Right cardiac atrium (tissue), 5 donors: ENCODE measurements at regions of chr4 and their contacts with region 1.

Region 1: DNA sequence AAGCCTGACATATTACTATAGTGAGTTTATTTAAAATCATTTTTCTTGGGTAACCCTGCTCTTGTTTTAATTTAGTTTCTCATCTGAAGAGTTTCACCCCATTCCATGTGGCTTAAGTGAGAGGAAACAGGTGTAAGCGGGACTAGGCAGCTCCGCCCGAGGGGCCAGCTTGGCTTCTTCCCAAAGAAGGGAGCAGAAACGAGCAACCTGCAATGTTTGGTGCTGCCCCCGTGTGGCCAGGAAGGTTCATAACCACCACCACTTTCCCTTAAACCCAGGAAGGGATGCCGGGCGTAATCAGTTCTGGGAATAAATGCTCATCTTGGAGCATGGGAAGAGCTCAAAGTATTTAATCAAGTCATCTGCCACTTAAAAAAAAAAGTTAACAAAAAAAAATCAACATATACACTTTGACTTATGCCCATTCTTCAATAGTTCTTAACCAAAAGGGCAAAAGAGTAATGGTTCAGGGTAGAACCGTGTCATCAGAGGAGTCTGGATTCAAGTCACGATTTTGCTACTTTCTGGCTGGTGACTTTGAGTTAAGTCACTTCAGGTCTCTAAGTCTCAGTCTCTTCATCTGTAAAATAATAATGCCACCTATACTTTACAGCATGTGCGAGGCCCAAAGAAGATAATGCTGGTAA is 147.9 kb downstream of the NSUN7 start:
- DNase-seq: peak; percentile 72 to 85 (median 83)
- ATAC-seq: peak; percentile 61 to 77
- H3K4me3 ChIP-seq: no peak overlapping the region
- H3K27ac ChIP-seq: no peak overlapping the region
- H3K4me1 ChIP-seq: no peaks in the 10 kb centered on the region
- H3K27me3 ChIP-seq: no peaks in the 10 kb centered on the region

Region 2: GRCh38 chr4:40629401-40630334 is 268.0 kb before region 1 on chr4 and contains the start of gene RBM47:
- intact Hi-C with region 1: no loop called
- DNase-seq: peak; percentile 63 to 86 (median 85)
- ATAC-seq: peak; percentile 92 to 96
- H3K4me3 ChIP-seq: peak within 1 kb of the TSS; percentile 46
- H3K27ac ChIP-seq: peak within 1 kb of the TSS; percentile 4
- H3K4me1 ChIP-seq: no peaks in the 10 kb centered on the region
- H3K27me3 ChIP-seq: no peaks in the 10 kb centered on the region
- total RNA-seq, gene RBM47: 3.4 to 8.2 (median 4.8) TPM

Region 3: GRCh38 chr4:40840985-40841571 is 56.6 kb before region 1 on chr4:
- intact Hi-C with region 1: loop called in 2 of 4 experiments (anchors 5 kb)
- DNase-seq: peak; percentile 75 to 91 (median 86)
- ATAC-seq: peak; percentile 50 to 81
- H3K4me3 ChIP-seq: no peak overlapping the region
- H3K27ac ChIP-seq: no peak overlapping the region
- H3K4me1 ChIP-seq: peaks cover 14% of the 10 kb centered on the region
- H3K27me3 ChIP-seq: no peaks in the 10 kb centered on the region

Region 4: GRCh38 chr4:41079871-41080560 is 182.3 kb after region 1 on chr4:
- intact Hi-C with region 1: no loop called
- DNase-seq: no peak
- ATAC-seq: no peak
- H3K4me3 ChIP-seq: no peak overlapping the region
- H3K27ac ChIP-seq: no peak overlapping the region
- H3K4me1 ChIP-seq: peaks cover 2% of the 10 kb centered on the region
- H3K27me3 ChIP-seq: no peaks in the 10 kb centered on the region